ENCODE measurements at regions of chr2 and their contacts with region 1.

Region 1: DNA sequence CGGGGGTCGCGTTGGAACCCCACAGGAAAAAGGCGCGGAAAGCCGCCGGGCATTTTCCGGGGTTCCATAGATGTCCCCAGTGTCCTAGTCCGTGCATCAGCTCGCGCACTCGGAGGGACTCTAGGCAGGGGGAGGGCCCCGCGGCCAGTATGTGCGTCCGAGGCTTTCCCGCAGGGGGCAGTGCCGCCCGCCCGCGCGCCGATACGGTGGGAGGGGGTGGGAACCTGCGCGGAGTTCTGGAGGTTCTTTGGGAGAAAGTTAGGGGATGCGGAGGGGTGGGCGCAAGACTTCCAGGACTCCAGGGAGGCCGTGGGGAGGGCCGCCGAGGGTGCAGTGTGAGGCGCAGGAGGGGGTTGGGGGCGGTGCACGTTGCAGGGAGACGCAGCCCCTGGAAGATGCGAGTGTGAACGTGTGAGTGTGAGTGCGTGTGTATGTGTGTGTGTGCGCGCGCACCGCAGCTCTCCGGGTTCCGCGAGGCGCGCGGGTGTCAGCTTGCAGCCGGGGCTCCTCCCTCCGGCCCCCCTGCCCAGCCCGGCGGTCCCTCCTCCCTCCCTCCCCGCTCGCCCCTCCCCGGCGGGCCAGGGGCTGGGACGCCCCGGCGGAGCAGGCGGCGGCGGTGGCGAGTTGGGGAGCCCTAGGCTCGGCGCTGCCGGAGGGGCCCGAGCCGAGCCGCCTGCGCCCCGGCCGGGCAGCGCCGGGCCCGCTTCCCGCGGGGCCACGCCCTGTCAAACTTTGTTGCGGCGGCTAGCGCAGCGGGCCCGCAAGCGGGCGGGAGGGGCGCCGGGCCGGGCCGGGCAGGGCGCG is at the start of gene TCF7L1:
- DNase-seq: peak; percentile 51 to 96
- H3K4me3 ChIP-seq: peak within 1 kb of the TSS; percentile 90 to 97 (median 93)
- H3K27ac ChIP-seq: peak within 1 kb of the TSS; percentile 84
- H3K4me1 ChIP-seq: peaks cover 10 to 17% (median 12%) of the 10 kb centered on the region in 4 experiments
- H3K27me3 ChIP-seq: no peaks in the 10 kb centered on the region
- CTCF ChIP-seq: peak; percentile 81 to 84 (median 84)
- EP300 ChIP-seq: no peak
- POLR2A ChIP-seq: peak; percentile 53 to 55; a peak in 2 of 3 replicates
- RAD21 ChIP-seq: peak; percentile 83 to 90
- total RNA-seq, gene TCF7L1: 108 and 110 TPM in 2 replicates

Region 2: GRCh38 chr2:84958135-84959044 is 174.6 kb before region 1 on chr2:
- CTCF ChIA-PET with region 1: no interaction called
- POLR2A ChIA-PET with region 1: interaction called, 13 read pairs
- DNase-seq: peak; percentile 78 to 99
- H3K4me3 ChIP-seq: peak overlapping the region in 1 of 4 experiments; percentile 42; a peak in 2 of 8 replicates
- H3K27ac ChIP-seq: peak overlapping the region; percentile 92
- H3K4me1 ChIP-seq: peaks cover 11 to 37% (median 33%) of the 10 kb centered on the region in 4 experiments
- H3K27me3 ChIP-seq: no peaks in the 10 kb centered on the region
- CTCF ChIP-seq: no peak
- EP300 ChIP-seq: peak in 1 of 2 experiments; percentile 96; a peak in 2 of 3 replicates
- POLR2A ChIP-seq: peak; percentile 44 to 91
- RAD21 ChIP-seq: peak in 1 of 2 experiments; percentile 21; a peak in 3 of 4 replicates

Region 3: GRCh38 chr2:85053802-85054201 is 79.2 kb before region 1 on chr2:
- CTCF ChIA-PET with region 1: no interaction called
- POLR2A ChIA-PET with region 1: no interaction called
- DNase-seq: no peak
- H3K4me3 ChIP-seq: no peak overlapping the region
- H3K27ac ChIP-seq: no peak overlapping the region
- H3K4me1 ChIP-seq: peaks cover 0 to 4% (median 0%) of the 10 kb centered on the region in 4 experiments; a peak in 3 of 7 replicates
- H3K27me3 ChIP-seq: no peaks in the 10 kb centered on the region
- CTCF ChIP-seq: no peak
- EP300 ChIP-seq: no peak
- POLR2A ChIP-seq: no peak; a peak in 1 of 3 replicates
- RAD21 ChIP-seq: no peak

Region 4: DNA sequence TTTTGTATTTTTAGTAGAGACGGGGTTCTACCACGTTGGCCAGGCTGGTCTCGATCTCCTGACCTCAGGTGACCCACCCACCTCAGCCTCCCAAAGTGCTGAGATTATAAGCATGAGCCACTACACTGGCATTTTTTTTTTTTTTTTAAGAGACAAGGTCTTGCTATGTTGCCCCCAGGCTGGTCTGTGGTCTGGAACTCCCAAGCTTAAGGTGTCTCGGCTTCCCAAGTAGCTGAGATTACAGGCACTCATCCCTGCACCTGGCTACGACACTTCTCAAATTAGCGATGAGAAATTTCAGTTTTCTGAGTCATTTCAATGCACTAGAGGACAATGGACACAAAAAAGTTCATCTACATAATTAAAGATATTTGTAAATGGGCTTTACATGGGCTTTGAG is 36.4 kb before region 1 on chr2:
- CTCF ChIA-PET with region 1: no interaction called
- POLR2A ChIA-PET with region 1: no interaction called
- DNase-seq: no peak
- H3K4me3 ChIP-seq: no peak overlapping the region
- H3K27ac ChIP-seq: no peak overlapping the region
- H3K4me1 ChIP-seq: no peaks in the 10 kb centered on the region
- H3K27me3 ChIP-seq: no peaks in the 10 kb centered on the region
- CTCF ChIP-seq: no peak
- EP300 ChIP-seq: no peak
- POLR2A ChIP-seq: no peak
- RAD21 ChIP-seq: no peak

Region 5: GRCh38 chr2:85148182-85148581 is 15.1 kb after region 1 on chr2:
- CTCF ChIA-PET with region 1: interaction called, 13 read pairs
- POLR2A ChIA-PET with region 1: interaction called, 40 read pairs
- DNase-seq: no peak
- H3K4me3 ChIP-seq: no peak overlapping the region
- H3K27ac ChIP-seq: no peak overlapping the region
- H3K4me1 ChIP-seq: peaks cover 0 to 7% (median 4%) of the 10 kb centered on the region in 4 experiments; a peak in 3 of 7 replicates
- H3K27me3 ChIP-seq: no peaks in the 10 kb centered on the region
- CTCF ChIP-seq: peak in 1 of 3 experiments; percentile 23; a peak in 1 of 4 replicates
- EP300 ChIP-seq: no peak
- POLR2A ChIP-seq: no peak
- RAD21 ChIP-seq: peak in 1 of 2 experiments; percentile 20; a peak in 1 of 4 replicates

Region 6: DNA sequence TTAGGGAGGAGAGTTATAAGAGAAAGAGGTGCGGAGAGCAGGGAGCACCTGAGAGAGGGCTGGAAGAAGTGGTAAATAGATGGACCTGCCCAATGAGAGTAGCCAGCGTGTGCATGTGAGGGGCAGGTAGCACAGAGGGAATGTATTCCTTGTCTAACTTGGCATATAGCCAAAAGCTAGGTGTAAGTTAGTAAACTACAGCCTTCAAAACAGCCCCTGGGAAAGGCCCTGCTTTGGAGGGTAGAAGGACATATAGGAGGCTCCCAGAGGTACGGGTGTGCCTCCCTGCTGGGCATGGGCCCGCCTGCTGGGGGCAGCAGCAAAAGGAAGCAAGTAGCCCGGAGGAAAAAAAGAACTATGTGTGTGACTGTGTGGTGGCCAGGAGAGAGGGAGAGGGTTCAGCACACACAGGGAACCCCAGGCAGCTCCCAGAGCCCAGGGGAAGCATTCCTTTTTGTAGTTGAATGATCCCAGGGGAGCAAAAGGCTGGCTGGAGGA is 48.1 kb after region 1 on chr2:
- CTCF ChIA-PET with region 1: interaction called, 29 read pairs
- POLR2A ChIA-PET with region 1: interaction called, 15 read pairs
- DNase-seq: no peak
- H3K4me3 ChIP-seq: no peak overlapping the region
- H3K27ac ChIP-seq: no peak overlapping the region
- H3K4me1 ChIP-seq: peaks cover 26 to 45% (median 29%) of the 10 kb centered on the region in 4 experiments
- H3K27me3 ChIP-seq: no peaks in the 10 kb centered on the region
- CTCF ChIP-seq: peak in 2 of 3 experiments; percentile 3 to 28; a peak in 3 of 4 replicates
- EP300 ChIP-seq: no peak
- POLR2A ChIP-seq: no peak
- RAD21 ChIP-seq: no peak

Region 7: GRCh38 chr2:85248773-85249509 is 115.9 kb after region 1 on chr2:
- CTCF ChIA-PET with region 1: interaction called, 8 read pairs
- POLR2A ChIA-PET with region 1: interaction called, 16 read pairs
- DNase-seq: no peak
- H3K4me3 ChIP-seq: no peak overlapping the region
- H3K27ac ChIP-seq: peak overlapping the region; percentile 48; the same call in 1 of the 2 replicates
- H3K4me1 ChIP-seq: peaks cover 20 to 63% (median 58%) of the 10 kb centered on the region in 4 experiments
- H3K27me3 ChIP-seq: no peaks in the 10 kb centered on the region
- CTCF ChIP-seq: no peak
- EP300 ChIP-seq: no peak
- POLR2A ChIP-seq: no peak
- RAD21 ChIP-seq: no peak

Region 8: GRCh38 chr2:85288244-85288725 is 155.2 kb after region 1 on chr2:
- CTCF ChIA-PET with region 1: interaction called, 65 read pairs
- POLR2A ChIA-PET with region 1: interaction called, 12 read pairs
- DNase-seq: no peak
- H3K4me3 ChIP-seq: no peak overlapping the region
- H3K27ac ChIP-seq: no peak overlapping the region
- H3K4me1 ChIP-seq: peaks cover 0 to 14% (median under 1%) of the 10 kb centered on the region in 4 experiments; a peak in 2 of 7 replicates
- H3K27me3 ChIP-seq: no peaks in the 10 kb centered on the region
- CTCF ChIP-seq: no peak
- EP300 ChIP-seq: no peak
- POLR2A ChIP-seq: no peak
- RAD21 ChIP-seq: no peak

Measured in H1 (cell line).